Activated CD4-positive, alpha-beta T cell treated with anti-CD3 and anti-CD28 coated beads for 36 hours (primary cell): ENCODE measurements at regions of chr19 and their contacts with region 1.

Region 1: DNA sequence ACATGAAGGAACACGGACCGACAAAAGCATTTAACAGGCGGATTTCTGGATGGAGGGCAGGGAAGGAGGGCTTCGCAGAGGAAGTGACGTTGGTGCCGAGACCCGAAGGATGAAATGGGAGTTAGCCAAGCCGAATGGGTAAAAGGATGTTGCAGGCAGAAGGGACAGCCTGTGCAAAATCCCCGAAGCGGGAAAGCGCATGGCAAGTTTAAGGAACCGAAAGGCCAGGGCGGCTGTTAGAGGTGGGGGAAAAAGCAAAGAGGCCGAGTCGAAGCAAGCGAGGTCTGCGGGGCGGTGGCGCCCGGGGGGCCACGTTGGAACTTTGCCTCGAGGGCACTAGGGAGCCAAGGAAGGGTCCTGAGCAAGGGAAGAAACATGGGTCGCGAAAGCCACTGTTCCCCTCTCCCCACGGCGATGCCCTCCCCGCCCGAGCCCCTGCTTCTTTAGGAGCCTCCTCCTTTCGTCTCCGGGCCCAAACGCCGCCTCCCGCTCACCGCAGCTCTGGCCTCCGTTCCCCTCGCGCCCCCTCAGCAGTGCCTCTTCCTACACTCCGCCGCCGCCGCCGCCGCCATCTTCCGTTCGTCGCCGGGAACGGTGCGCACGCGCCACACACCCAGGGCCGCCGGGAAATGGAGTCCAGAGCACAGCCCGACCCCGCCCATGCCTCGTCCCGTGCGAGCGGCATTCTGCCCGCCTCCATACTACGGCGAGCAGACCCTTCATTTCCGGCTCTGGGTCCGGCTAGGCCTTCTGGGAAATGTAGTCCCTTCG is at the start of gene SYMPK:
- DNase-seq: peak; percentile 100
- ATAC-seq: peak; percentile 96
- H3K4me3 Mint-ChIP-seq: peak within 1 kb of the TSS; percentile 87
- H3K27ac Mint-ChIP-seq: peak within 1 kb of the TSS; percentile 95
- H3K4me1 Mint-ChIP-seq: peaks cover 31% of the 10 kb centered on the region
- H3K27me3 Mint-ChIP-seq: peaks cover 17% of the 10 kb centered on the region
- total RNA-seq, gene SYMPK: 108 to 128 TPM

Region 2: DNA sequence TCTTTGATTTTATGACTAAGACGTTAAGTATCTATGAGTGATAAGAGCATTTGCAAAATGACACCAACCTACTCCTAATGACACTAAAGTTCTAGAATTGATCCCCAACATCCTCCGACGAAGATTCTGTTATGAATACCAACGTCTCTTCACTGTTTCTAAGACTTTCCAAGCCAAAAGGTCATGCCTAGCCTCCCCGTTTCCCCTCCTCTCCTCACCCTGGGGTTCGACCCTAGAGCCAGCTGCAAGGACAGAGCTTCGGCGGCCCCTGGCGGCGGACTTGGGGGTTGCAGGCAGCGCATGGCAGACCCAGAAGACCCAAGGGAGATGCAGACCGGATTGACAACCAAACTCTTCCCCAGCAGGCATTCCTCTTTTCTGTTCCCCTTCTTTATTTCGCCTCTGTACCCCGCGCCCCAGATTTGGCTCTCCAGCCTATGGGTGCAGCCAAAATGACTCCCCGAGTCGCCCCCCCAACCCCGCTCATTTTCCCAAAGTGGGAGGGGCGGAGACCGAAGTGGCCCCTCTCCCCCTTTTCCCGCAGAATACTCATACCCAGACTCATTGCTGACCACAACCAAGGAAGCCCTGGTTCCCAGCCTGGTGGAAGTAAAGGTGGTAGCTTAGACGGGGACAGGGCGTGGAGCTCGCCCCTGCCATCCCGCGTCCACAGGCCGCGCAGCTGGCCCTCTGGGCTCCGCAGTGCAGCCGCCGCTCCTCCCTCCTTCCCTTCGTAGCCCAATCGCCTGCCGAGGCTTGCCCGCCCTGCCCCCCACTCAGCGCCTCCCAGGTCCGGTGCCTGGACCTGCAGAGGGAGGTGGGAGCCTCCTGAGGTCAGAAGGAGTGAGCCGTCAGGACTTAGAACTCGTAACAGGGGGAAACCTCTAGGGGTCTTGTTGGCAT is 219.5 kb before region 1 on chr19:
- CTCF ChIA-PET with region 1: no interaction called
- POLR2A ChIA-PET with region 1: interaction called, 3 read pairs
- intact Hi-C with region 1: loop called in 1 of 2 experiments (anchors 1 kb)
- DNase-seq: peak; percentile 97
- ATAC-seq: peak; percentile 54
- H3K4me3 Mint-ChIP-seq: peak overlapping the region; percentile 94
- H3K27ac Mint-ChIP-seq: peak overlapping the region; percentile 93
- H3K4me1 Mint-ChIP-seq: peaks cover 57% of the 10 kb centered on the region
- H3K27me3 Mint-ChIP-seq: no peaks in the 10 kb centered on the region

Region 3: GRCh38 chr19:45792470-45793177 is 70.1 kb before region 1 on chr19 and contains the start of gene DMWD:
- CTCF ChIA-PET with region 1: interaction called, 3 read pairs
- POLR2A ChIA-PET with region 1: no interaction called
- intact Hi-C with region 1: loop called (anchors 1 to 5 kb)
- DNase-seq: peak; percentile 100
- ATAC-seq: peak; percentile 93
- H3K4me3 Mint-ChIP-seq: peak within 1 kb of the TSS; percentile 95
- H3K27ac Mint-ChIP-seq: peak within 1 kb of the TSS; percentile 75
- H3K4me1 Mint-ChIP-seq: peaks cover 30% of the 10 kb centered on the region
- H3K27me3 Mint-ChIP-seq: peaks cover 16% of the 10 kb centered on the region
- total RNA-seq, gene DMWD: 31.1 to 35.1 TPM

Region 4: DNA sequence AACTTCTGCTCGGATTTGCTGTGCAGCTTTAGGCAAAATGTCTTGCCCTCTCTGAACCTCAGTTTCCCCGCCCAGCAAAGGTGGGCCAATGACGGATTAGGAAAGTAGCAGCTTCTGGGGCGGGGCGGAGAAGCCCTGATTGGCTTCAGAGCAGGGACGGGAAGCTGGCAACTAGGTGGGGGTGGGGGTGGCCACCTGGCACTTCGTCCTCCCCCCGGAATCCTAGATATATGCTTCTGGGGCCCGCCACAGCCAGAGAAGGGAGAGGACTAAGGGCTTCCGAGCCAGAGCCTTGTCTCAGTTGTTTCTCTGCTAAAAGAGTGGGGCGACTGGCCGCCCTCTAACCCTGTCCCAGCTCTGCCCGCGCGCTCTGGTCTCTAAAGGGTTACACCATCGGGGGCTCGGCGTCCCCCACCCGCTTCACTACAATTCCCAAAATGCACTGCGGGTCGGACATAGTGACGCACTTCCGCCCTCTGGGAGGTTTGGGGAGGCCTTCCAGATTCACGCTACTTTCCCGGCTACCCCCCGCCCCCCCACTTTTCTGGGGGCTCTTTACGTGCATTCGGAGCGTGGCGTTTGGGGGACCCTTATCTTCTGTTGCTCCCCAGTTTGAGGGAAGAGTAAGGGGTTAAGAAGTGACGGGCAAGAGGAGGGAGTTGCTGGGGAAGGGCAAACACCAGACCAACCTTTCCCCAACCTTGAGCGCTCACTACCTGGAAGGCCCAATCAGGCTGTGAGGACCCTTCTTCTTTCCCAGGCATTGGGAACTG is 23.9 kb after region 1 on chr19:
- CTCF ChIA-PET with region 1: interaction called, 84 read pairs
- POLR2A ChIA-PET with region 1: interaction called, 23 read pairs
- intact Hi-C with region 1: loop called (anchors 1 kb)
- DNase-seq: peak; percentile 96
- ATAC-seq: peak; percentile 85
- H3K4me3 Mint-ChIP-seq: peak overlapping the region; percentile 85
- H3K27ac Mint-ChIP-seq: peak overlapping the region; percentile 95
- H3K4me1 Mint-ChIP-seq: peaks cover 17% of the 10 kb centered on the region
- H3K27me3 Mint-ChIP-seq: no peaks in the 10 kb centered on the region

Region 5: GRCh38 chr19:46016426-46017094 is 153.8 kb after region 1 on chr19:
- CTCF ChIA-PET with region 1: no interaction called
- POLR2A ChIA-PET with region 1: no interaction called
- intact Hi-C with region 1: loop called in 1 of 2 experiments (anchors 1 kb)
- DNase-seq: peak; percentile 90
- ATAC-seq: peak; percentile 73
- H3K4me3 Mint-ChIP-seq: peak overlapping the region; percentile 66
- H3K27ac Mint-ChIP-seq: no peak overlapping the region
- H3K4me1 Mint-ChIP-seq: peaks cover 16% of the 10 kb centered on the region
- H3K27me3 Mint-ChIP-seq: peaks cover 14% of the 10 kb centered on the region

Region 6: GRCh38 chr19:46850228-46851203 is 987.8 kb after region 1 on chr19 and contains the start of gene AP2S1:
- CTCF ChIA-PET with region 1: no interaction called
- POLR2A ChIA-PET with region 1: no interaction called
- intact Hi-C with region 1: loop called in 1 of 2 experiments (anchors 2 kb)
- DNase-seq: peak; percentile 95
- ATAC-seq: peak; percentile 97
- H3K4me3 Mint-ChIP-seq: peak within 1 kb of the TSS; percentile 92
- H3K27ac Mint-ChIP-seq: peak within 1 kb of the TSS; percentile 64
- H3K4me1 Mint-ChIP-seq: peaks cover 21% of the 10 kb centered on the region
- H3K27me3 Mint-ChIP-seq: no peaks in the 10 kb centered on the region
- total RNA-seq, gene AP2S1: 102 to 104 TPM